ENCODE measurements at regions of chr17 and their contacts with region 1.

Region 1: GRCh38 chr17:7515911-7516610 is 31.9 kb downstream of the POLR2A start:
- H3K4me3 ChIP-seq: no peak overlapping the region
- H3K27ac ChIP-seq: no peak overlapping the region
- H3K4me1 ChIP-seq: no peaks in the 10 kb centered on the region
- CTCF ChIP-seq: no peak

Region 2: DNA sequence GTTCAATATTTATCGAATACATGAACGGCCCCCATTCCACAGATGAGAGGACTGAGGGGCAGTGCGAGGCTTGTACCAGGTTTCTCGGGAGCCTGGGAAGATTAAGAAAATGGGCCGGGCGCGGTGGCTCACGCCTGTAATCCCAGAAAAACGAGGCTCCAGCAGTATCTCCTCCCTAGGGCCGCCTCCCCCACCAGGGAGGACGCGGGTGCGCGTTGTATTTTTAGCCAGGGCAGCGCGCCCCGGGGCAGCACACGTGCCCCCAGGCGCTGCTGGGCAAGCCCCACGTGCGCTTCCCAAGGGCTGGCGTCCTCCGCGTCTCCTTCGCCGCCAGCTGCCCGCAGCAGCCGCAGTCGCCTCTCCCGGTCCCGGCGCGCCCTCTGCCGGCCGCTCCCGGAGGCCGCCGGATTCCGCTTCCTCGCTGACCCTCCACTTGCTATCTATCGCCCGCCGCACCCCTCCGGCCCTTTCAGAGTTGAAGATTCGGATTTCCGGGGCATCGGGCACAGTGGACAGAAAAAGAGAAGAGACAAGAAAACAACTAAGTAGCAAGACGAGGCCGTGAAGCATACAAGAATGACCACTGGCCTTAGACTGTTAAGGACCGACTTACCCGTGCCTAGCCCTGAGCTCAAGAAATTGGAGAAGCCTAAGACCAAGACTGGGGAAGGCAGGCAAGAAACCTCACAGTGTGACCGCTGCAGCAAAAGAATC is 219.7 kb before region 1 on chr17:
- CTCF ChIA-PET with region 1: no interaction called
- POLR2A ChIA-PET with region 1: no interaction called
- H3K4me3 ChIP-seq: no peak overlapping the region
- H3K27ac ChIP-seq: no peak overlapping the region
- H3K4me1 ChIP-seq: peaks cover 6% of the 10 kb centered on the region; the same call in 1 of the 2 replicates
- CTCF ChIP-seq: peak; percentile 96

Region 3: DNA sequence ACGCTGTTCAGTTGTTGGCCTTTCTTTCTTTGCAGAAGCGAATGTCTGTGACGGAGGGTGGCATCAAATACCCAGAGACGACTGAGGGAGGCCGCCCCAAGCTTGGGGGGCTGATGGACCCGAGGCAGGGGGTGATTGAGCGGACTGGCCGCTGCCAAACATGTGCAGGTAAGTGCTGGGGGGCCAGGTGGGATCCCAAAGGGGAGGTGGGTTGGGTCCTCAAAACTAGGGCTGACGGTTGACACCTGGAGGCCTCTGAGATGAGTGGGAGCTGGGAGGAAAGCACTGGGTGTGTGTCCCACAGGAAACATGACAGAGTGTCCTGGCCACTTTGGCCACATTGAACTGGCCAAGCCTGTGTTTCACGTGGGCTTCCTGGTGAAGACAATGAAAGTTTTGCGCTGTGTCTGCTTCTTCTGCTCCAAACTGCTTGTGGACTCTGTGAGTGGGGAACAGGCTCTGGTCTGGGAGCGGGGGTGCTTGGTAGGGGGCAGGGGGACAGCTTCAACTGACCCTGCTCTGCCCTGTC is 20.1 kb before region 1 on chr17:
- CTCF ChIA-PET with region 1: interaction called, 30 read pairs
- POLR2A ChIA-PET with region 1: no interaction called
- H3K4me3 ChIP-seq: no peak overlapping the region
- H3K27ac ChIP-seq: no peak overlapping the region
- H3K4me1 ChIP-seq: peaks cover 3% of the 10 kb centered on the region; the same call in 1 of the 2 replicates
- CTCF ChIP-seq: no peak

Region 4: DNA sequence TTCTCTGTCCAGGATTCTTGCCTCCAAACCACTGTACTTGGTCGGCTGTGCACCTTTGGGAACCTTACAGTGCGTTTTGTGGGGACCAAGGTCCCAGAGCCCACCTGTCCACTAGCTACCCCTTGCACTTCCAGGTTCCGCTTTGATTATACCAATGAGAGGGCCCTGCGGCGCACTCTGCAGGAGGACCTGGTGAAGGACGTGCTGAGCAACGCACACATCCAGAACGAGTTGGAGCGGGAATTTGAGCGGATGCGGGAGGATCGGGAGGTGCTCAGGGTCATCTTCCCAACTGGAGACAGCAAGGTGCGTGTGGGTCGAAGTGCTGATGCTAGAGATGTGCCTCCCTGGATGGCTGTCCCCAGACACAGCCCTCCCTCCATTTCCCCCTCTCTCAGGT is 13.1 kb before region 1 on chr17:
- CTCF ChIA-PET with region 1: interaction called, 25 read pairs
- POLR2A ChIA-PET with region 1: interaction called, 4 read pairs
- H3K4me3 ChIP-seq: no peak overlapping the region
- H3K27ac ChIP-seq: no peak overlapping the region
- H3K4me1 ChIP-seq: no peaks in the 10 kb centered on the region
- CTCF ChIP-seq: no peak

Region 5: DNA sequence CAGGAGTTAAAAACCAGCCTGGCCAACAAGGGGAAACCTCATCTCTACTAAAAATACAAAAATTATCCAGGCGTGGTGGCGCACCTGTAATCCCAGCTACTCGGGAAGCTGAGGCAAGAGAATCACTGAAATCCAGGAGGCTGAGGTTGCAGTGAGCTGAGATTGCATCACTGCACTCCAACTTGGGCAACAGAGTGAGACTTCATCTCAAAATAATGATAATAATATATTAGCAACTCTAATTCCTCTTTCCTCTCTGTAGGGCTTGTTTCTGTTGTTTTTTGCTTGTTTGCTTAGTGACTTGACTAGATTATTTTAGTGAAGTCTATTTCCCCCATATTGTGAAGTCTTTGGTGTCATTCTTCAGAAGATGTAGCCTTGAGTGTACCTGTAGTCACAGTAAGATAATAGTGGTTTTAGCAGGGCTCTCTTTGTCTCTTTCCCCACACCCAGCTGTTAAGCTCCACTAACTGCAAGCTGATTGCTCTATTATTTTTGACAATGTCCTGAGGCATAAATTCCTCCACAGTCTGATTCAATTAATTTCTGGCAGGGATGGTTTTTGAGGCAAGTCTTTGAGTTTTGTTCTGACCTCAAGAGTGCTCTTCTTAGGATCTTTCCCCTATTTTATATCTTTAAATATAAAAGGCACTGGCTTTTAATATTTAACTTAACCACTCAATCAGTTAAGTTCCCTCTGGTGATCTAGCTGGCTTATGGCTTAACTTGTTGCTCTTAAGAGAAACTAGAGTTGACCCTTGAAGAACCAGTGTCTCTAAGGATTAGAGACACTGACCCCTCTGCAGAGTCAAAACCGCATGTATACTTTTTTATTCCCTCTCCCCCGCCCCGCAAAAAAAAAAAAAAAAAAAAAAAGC is 14.2 kb after region 1 on chr17:
- CTCF ChIA-PET with region 1: interaction called, 34 read pairs
- POLR2A ChIA-PET with region 1: interaction called, 3 read pairs
- H3K4me3 ChIP-seq: no peak overlapping the region
- H3K27ac ChIP-seq: no peak overlapping the region
- H3K4me1 ChIP-seq: no peaks in the 10 kb centered on the region
- CTCF ChIP-seq: no peak

Region 6: GRCh38 chr17:7538891-7539290 is 22.8 kb after region 1 on chr17:
- CTCF ChIA-PET with region 1: interaction called, 10 read pairs
- POLR2A ChIA-PET with region 1: no interaction called
- H3K4me3 ChIP-seq: no peak overlapping the region
- H3K27ac ChIP-seq: no peak overlapping the region
- H3K4me1 ChIP-seq: no peaks in the 10 kb centered on the region
- CTCF ChIP-seq: no peak

Region 7: DNA sequence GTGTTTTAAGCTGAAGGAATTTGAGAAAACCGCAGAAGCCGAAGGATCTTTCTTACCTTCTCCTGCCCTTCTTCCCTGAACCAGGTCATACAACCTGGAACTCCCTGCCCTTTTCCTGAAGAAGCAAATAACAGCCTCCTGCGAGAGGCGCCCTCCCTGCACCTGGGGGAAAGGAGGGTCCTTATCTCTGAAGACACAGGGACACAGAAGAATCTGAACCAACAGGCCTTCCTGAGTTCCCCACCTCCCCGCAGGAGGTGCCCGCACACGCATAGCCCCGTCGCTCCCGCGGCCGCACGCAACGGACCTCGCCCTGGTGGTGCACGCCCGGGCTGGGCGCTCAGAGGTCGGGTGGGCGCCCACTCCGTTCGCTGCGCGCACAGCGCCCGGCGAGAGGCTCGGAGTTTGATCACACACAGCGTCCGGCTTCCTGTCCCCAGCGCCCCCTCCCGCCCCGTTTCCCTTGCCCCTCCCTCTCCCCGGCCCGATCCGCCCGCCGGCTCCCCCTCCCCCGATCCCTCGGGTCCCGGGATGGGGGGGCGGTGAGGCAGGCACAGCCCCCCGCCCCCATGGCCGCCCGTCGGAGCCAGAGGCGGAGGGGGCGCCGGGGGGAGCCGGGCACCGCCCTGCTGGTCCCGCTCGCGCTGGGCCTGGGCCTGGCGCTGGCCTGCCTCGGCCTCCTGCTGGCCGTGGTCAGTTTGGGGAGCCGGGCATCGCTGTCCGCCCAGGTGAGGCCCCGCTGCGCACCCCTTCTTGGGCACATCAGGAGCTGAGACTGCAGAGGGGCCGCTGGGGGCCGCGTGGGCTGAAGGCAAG is 32.7 kb after region 1 on chr17 and contains the start of gene TNFSF12:
- CTCF ChIA-PET with region 1: interaction called, 18 read pairs
- POLR2A ChIA-PET with region 1: no interaction called
- H3K4me3 ChIP-seq: peak within 1 kb of the TSS; percentile 52
- H3K27ac ChIP-seq: no peak within 1 kb of the TSS; the same call in 1 of the 2 replicates
- H3K4me1 ChIP-seq: peaks cover 3% of the 10 kb centered on the region; the same call in 1 of the 2 replicates
- CTCF ChIP-seq: peak; percentile 58; the same call in 1 of the 2 replicates

Measured in HEK293 (cell line).